Activated naive CD4-positive, alpha-beta T cell treated with anti-CD3 and anti-CD28 coated beads for 36 hours (primary cell): ENCODE measurements at regions of chr2 and their contacts with region 1.

Region 1: DNA sequence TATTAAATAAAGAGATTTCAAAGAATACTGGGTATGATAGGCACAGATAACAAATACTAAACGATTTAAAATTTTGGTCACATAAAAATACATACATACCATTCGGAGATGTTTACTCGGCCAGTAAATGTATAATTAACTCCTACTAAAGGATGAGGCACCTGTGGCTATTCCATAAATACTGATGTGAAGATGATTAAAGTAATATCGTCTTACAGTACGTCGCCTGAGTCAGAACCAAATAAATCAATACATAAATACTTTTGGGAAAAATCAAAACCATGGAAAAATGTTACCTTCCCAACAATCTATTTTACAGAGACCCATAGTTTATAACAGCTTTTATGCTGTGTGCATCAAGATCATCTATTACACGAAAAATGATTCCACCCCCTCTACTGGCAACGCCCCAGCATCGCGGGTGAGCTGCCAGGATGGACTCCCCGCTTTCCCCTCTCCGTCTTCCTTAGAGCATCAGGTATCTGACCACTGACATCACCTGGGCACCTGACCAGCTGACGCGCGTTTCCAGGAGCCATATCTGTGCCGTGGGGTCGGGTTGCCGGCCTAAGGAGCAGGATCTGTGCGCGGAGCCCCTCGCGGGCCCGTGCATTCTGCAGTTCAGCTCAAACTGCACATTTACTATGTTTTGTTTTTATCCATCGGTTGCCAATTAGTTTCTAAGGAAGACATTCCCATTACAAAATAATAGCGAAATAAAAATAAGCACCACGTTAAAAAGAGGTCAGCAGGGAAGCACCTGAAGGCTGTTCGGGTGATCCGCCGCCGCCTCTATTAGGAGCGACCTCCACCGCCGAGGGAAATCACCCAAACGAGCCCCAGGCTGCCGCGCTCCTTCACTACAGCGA is 901 bp downstream of the ICA1L start:
- DNase-seq: peak; percentile 85
- H3K4me3 Mint-ChIP-seq: peak overlapping the region; percentile 88
- H3K27ac Mint-ChIP-seq: peak overlapping the region; percentile 72
- H3K4me1 Mint-ChIP-seq: peaks cover 7% of the 10 kb centered on the region
- H3K27me3 Mint-ChIP-seq: no peaks in the 10 kb centered on the region

Region 2: GRCh38 chr2:202577250-202578183 is 293.1 kb before region 1 on chr2:
- CTCF ChIA-PET with region 1: interaction called, 14 read pairs
- intact Hi-C with region 1: loop called (anchors 1 kb)
- DNase-seq: no peak
- H3K4me3 Mint-ChIP-seq: no peak overlapping the region
- H3K27ac Mint-ChIP-seq: no peak overlapping the region
- H3K4me1 Mint-ChIP-seq: peaks cover 2% of the 10 kb centered on the region
- H3K27me3 Mint-ChIP-seq: no peaks in the 10 kb centered on the region

Region 3: GRCh38 chr2:202681688-202682205 is 188.9 kb before region 1 on chr2:
- CTCF ChIA-PET with region 1: no interaction called
- intact Hi-C with region 1: no loop called
- DNase-seq: no peak
- H3K4me3 Mint-ChIP-seq: no peak overlapping the region
- H3K27ac Mint-ChIP-seq: no peak overlapping the region
- H3K4me1 Mint-ChIP-seq: peaks cover 31% of the 10 kb centered on the region
- H3K27me3 Mint-ChIP-seq: no peaks in the 10 kb centered on the region

Region 4: DNA sequence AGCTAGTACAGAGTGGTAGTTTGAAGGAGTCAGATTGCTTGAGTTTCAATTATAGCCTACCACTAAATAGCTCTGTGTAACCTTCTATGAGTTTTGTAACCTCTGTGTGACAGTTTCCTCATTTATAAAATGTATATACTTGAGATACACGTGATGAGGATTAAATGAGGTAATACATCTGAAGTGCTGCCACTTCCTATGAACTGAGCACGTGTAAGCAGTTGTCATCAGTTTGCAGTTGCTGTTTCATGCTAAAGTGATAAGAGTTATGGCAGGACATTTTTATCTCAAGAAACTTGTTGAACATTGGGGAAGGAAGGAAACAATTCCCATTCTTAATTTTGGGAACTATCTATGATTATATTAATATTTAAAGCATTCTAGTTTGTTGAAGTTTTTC is 79.9 kb after region 1 on chr2:
- CTCF ChIA-PET with region 1: no interaction called
- intact Hi-C with region 1: no loop called
- DNase-seq: no peak
- H3K4me3 Mint-ChIP-seq: no peak overlapping the region
- H3K27ac Mint-ChIP-seq: no peak overlapping the region
- H3K4me1 Mint-ChIP-seq: no peaks in the 10 kb centered on the region
- H3K27me3 Mint-ChIP-seq: no peaks in the 10 kb centered on the region

Region 5: GRCh38 chr2:203014456-203015199 is 144.0 kb after region 1 on chr2 and contains the start of gene NBEAL1:
- CTCF ChIA-PET with region 1: interaction called, 3 read pairs
- intact Hi-C with region 1: loop called (anchors 1 kb)
- DNase-seq: peak; percentile 97
- H3K4me3 Mint-ChIP-seq: peak within 1 kb of the TSS; percentile 95
- H3K27ac Mint-ChIP-seq: peak within 1 kb of the TSS; percentile 74
- H3K4me1 Mint-ChIP-seq: peaks cover 27% of the 10 kb centered on the region
- H3K27me3 Mint-ChIP-seq: no peaks in the 10 kb centered on the region
- total RNA-seq, gene NBEAL1: 7.9 to 8.3 TPM